ENCODE measurements at regions of chr10 and their contacts with region 1.

Region 1: DNA sequence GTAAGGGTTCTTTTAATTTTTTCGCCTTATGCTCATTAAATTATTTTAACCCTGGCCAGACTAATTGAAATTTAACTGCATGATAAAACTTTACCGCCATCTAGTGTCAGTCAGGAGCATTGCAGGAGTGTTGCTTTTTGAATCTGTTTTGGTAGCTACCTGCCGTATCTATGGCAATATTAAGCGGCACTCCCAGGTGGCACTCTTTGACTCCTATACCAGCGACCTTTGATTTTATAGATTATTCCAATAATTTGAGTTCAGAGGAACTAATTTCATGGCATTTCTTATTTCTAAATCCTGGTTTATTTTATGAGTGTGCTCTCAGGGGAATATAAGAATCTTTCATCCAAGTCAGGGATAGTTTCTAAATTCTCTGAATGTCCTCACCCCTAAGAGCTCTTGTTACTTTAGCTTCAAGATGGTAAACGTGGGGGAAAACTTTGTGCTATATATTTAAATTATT is 198.9 kb downstream of the REEP3 start:
- DNase-seq: peak; percentile 63
- H3K4me3 Mint-ChIP-seq: no peak overlapping the region
- H3K27ac Mint-ChIP-seq: no peak overlapping the region
- H3K4me1 Mint-ChIP-seq: peaks cover 18% of the 10 kb centered on the region
- H3K27me3 Mint-ChIP-seq: peaks cover 26% of the 10 kb centered on the region

Region 2: DNA sequence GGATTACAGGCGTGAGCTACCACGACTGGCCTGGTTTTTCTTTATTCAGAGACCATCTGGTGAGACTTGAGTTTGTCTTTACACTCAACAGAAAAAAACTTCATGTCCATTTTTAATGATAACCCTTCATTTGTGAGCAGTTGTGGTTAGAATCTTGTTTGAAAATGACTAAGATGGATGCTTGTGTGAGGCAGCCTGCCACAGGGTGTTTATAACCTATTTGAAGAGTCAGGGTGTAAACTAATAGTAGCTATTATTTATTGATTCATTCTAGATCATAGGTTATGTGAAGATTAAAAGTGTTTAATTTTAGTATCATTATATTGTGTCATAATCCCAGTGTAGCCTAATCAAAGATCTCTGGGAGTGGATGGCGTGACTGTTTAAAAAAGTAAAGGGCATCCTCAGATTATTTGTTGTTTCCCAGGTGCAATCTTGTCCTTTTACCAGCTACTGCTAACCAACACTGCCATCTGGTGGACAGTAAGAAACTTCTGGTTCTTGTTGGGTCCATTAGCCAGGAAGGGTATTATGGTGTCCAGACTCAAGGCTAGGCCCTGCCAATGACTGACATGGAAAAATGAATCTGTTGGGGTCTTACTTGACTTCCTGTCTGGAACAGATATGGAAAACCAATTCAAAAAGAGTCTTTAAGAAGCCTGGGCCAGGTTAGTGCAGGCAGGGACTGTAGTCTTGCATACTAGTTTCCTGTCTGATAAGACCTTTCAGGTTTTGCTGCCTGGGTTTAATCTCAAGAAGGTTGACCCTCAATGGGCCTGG is 562.1 kb before region 1 on chr10:
- CTCF ChIA-PET with region 1: interaction called, 184 read pairs
- DNase-seq: peak; percentile 54
- H3K4me3 Mint-ChIP-seq: no peak overlapping the region
- H3K27ac Mint-ChIP-seq: no peak overlapping the region
- H3K4me1 Mint-ChIP-seq: peaks cover 5% of the 10 kb centered on the region
- H3K27me3 Mint-ChIP-seq: no peaks in the 10 kb centered on the region

Region 3: DNA sequence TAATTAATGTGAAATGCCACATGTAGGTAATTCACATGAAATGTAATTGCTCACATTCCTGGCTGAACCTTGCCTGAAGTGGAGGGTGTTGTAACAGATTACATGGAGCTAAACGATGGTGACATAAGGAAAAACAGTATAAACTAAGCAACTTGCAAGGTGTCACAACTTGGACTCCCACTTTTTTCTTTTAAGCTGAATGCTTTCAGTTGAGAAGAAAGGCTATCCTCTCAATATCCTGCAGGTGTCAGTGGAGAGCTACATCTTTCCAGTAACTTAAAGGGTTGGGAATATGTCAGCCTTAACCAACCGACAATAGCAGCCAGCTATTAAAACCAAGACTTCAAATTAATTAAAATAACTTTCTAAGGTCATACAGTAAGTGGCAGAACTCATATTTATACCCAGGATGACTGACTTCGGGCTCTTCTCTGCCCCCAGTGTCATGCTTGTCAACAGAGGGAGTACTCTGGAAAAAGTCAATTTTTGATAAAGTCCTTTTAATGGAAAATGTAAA is 553.3 kb before region 1 on chr10:
- CTCF ChIA-PET with region 1: interaction called, 184 read pairs
- DNase-seq: no peak
- H3K4me3 Mint-ChIP-seq: no peak overlapping the region
- H3K27ac Mint-ChIP-seq: no peak overlapping the region
- H3K4me1 Mint-ChIP-seq: peaks cover 25% of the 10 kb centered on the region
- H3K27me3 Mint-ChIP-seq: no peaks in the 10 kb centered on the region

Region 4: DNA sequence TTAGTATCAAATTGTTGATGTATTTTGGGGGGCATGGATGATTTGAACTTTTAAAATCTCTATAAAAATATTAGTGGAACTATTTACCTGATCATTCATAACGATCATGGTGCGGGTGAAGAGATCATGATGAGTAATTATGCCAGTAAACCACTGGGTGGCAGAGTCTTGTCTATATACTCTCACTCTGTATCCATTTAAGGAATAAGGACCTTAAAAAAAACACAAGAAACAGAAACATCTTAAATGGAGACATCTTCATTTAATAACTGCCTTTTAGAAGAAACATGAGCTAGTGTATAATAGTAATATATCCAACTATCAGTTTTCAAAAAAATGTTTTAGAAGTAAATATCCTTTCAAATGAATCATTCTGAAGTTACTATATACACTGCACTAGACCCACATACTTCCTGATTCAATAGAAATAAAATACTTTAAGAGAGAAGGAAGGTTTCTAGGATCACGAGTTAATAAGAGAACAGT is 502.9 kb before region 1 on chr10:
- CTCF ChIA-PET with region 1: interaction called, 18 read pairs
- DNase-seq: peak; percentile 32
- H3K4me3 Mint-ChIP-seq: no peak overlapping the region
- H3K27ac Mint-ChIP-seq: no peak overlapping the region
- H3K4me1 Mint-ChIP-seq: peaks cover 33% of the 10 kb centered on the region
- H3K27me3 Mint-ChIP-seq: no peaks in the 10 kb centered on the region

Region 5: DNA sequence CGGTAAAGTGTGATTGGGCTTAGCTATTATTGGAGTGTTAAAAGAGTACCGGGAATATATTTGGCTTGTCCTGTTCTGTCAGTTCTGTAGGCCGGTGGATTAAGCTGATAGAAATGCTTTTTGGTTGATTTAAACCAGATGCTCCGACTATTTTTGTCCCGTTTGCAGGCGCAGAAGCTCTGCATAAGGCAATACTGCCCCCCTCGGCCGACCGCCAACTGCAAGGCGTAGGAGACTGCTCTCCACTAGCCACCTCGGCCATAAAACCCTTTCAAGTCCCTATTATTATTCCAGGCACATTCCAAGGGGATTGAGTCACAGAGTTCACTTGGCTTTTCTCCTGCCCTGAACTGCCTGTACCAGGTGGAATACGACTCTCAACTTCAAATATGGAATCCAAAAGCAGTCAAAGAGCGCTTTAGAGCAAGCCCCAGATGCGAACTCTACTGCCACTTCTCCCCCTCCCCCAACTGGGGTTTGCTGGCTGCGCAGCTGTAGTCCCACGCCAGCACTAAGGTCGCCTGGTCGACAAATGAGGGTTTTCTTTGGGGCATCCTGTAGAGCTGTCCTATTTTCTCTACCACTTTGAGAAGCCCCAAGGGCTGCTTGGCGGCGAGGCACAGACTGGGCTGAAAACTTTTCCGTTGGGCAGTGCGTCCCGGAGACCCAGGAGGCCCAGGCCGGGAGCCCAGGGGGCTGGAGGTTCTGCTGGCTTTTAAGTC is 90.6 kb before region 1 on chr10:
- CTCF ChIA-PET with region 1: interaction called, 18 read pairs
- DNase-seq: peak; percentile 87
- H3K4me3 Mint-ChIP-seq: peak overlapping the region; percentile 87
- H3K27ac Mint-ChIP-seq: peak overlapping the region; percentile 88
- H3K4me1 Mint-ChIP-seq: peaks cover 39% of the 10 kb centered on the region
- H3K27me3 Mint-ChIP-seq: peaks cover 24% of the 10 kb centered on the region

Region 6: DNA sequence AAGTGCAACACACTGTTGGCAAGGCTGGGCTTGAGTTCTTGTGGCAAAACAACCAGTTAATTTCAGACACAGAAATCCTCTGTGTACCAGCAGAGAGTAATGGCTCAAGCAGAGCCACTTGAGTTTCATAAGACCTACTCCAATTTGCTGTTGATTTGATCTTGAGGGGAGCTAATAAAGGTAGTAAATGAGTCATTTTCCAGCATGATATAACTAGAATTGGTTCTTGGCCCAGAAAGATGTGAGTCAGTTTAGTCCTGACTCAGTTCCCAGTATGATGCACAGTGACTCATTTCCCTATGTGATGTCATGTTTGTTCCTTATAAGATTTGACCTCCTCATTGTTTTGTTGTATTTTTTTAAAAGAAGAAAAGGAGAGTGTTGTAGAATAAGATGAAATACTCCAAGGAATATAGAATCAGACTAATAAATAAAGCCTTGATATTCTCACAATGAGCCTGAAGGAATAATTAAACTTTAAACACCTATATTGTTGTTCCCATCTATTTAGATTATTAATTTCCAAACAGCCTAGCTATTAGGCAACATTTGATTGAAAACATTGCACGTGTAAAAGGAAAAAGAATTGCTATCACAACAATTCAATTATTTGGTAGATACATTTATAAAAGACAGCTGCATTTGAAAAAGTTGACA is 12.7 kb before region 1 on chr10:
- CTCF ChIA-PET with region 1: interaction called, 16 read pairs
- DNase-seq: no peak
- H3K4me3 Mint-ChIP-seq: no peak overlapping the region
- H3K27ac Mint-ChIP-seq: no peak overlapping the region
- H3K4me1 Mint-ChIP-seq: peaks cover 8% of the 10 kb centered on the region
- H3K27me3 Mint-ChIP-seq: no peaks in the 10 kb centered on the region

Region 7: DNA sequence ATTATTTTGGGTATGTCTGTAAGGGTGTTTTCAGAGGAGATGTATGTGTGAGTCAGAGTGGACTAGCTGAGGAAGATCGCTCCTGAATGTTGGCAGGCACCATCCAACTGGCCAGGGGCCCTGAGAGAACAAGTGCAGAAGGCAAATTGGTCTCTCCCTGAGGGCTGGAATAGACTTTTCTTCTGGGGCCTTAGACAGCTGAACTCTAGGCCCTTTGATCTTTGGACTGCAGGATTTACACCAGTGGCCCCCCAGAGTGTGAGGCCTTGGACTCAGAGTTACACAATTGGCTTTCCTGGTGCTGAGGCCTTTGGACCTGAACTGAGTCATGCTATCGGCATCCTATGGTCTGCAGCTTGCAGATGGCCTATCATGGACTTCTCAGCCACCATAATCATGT is 18.3 kb after region 1 on chr10:
- CTCF ChIA-PET with region 1: no interaction called
- DNase-seq: no peak
- H3K4me3 Mint-ChIP-seq: no peak overlapping the region
- H3K27ac Mint-ChIP-seq: no peak overlapping the region
- H3K4me1 Mint-ChIP-seq: no peaks in the 10 kb centered on the region
- H3K27me3 Mint-ChIP-seq: peaks cover 5% of the 10 kb centered on the region

Region 8: GRCh38 chr10:64007157-64007556 is 287.1 kb after region 1 on chr10:
- CTCF ChIA-PET with region 1: no interaction called
- DNase-seq: no peak
- H3K4me3 Mint-ChIP-seq: no peak overlapping the region
- H3K27ac Mint-ChIP-seq: no peak overlapping the region
- H3K4me1 Mint-ChIP-seq: no peaks in the 10 kb centered on the region
- H3K27me3 Mint-ChIP-seq: no peaks in the 10 kb centered on the region

Measured in activated naive CD4-positive, alpha-beta T cell treated with anti-CD3 and anti-CD28 coated beads, Interleukin-2, amount 10 ng/mL, durations not matched to agents 7 days and 5 days (primary cell).